ENCODE measurements at regions of chr1 and their contacts with region 1.

Region 1: DNA sequence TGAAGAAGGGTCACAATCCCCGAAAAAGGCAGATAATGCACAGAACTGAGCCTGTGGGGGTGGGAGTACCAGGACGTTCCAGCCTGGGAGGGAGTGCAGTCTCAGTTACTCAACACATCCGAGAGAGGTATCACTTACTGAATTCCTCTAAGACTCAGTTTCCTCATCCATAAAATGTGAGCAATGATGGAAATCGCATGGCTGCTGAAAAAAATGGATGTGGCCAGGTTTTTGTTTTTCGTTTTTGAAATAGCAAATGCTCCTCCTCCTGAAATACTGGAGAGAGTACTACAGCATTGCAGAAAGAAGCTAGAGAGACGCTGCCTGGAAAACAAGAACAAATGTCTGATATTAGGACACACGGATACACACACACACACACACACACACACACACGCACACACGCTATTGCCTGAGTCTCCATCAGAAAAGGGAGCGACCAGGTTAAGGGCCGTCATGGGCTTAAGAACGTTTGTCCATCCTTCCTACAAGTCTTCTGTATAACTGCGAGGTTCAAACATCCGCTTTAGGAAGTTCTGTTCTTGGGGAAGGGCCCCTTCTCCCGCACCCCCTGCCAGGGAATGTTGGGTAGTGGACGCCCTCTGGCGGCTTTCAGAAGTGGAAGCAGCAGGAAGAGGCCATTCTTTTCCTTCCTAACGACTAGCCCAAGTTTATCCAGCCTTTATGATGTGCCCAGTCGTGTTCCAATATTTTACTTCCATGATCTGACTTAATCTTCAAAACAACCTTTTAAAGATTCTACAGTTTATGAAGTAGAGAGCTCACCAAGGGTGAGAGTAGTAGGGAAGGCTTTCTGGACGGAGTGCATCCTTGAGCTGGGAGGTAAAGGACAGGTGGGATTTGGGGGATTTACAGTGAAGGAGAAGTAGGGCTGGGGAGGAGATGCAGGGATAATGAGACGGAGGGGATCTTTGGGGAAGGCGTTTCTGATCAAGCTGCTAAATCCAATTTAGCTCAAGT is 699 bp upstream of the NES start:
- DNase-seq: no peak
- H3K4me3 Mint-ChIP-seq: no peak overlapping the region
- H3K27ac Mint-ChIP-seq: no peak overlapping the region
- H3K4me1 Mint-ChIP-seq: peaks cover 8% of the 10 kb centered on the region
- H3K27me3 Mint-ChIP-seq: peaks cover 74% of the 10 kb centered on the region

Region 2: GRCh38 chr1:156659994-156660751 is 17.7 kb before region 1 on chr1:
- intact Hi-C with region 1: loop called (anchors 1 kb)
- DNase-seq: peak; percentile 89
- H3K4me3 Mint-ChIP-seq: peak overlapping the region; percentile 90
- H3K27ac Mint-ChIP-seq: peak overlapping the region; percentile 97
- H3K4me1 Mint-ChIP-seq: peaks cover 41% of the 10 kb centered on the region
- H3K27me3 Mint-ChIP-seq: peaks cover 26% of the 10 kb centered on the region

Region 3: GRCh38 chr1:156876281-156876680 is 198.4 kb after region 1 on chr1:
- intact Hi-C with region 1: no loop called
- DNase-seq: no peak
- H3K4me3 Mint-ChIP-seq: no peak overlapping the region
- H3K27ac Mint-ChIP-seq: no peak overlapping the region
- H3K4me1 Mint-ChIP-seq: peaks cover 6% of the 10 kb centered on the region
- H3K27me3 Mint-ChIP-seq: no peaks in the 10 kb centered on the region